ENCODE measurements at regions of chr19 and their contacts with region 1.

Region 1: GRCh38 chr19:38335949-38336637 is 463 bp downstream of the CATSPERG start:
- DNase-seq: peak; percentile 83
- H3K4me3 ChIP-seq: peak overlapping the region; percentile 94
- H3K27ac ChIP-seq: peak overlapping the region; percentile 70
- H3K27me3 ChIP-seq: no peaks in the 10 kb centered on the region
- CTCF ChIP-seq: no peak

Region 2: GRCh38 chr19:38233740-38234251 is 102.3 kb before region 1 on chr19:
- CTCF ChIA-PET with region 1: interaction called, 32 read pairs
- POLR2A ChIA-PET with region 1: no interaction called
- DNase-seq: peak; percentile 27
- H3K4me3 ChIP-seq: no peak overlapping the region
- H3K27ac ChIP-seq: no peak overlapping the region
- H3K27me3 ChIP-seq: peaks cover 5% of the 10 kb centered on the region
- CTCF ChIP-seq: peak; percentile 89

Region 3: GRCh38 chr19:38351865-38352395 is 15.8 kb after region 1 on chr19:
- CTCF ChIA-PET with region 1: no interaction called
- POLR2A ChIA-PET with region 1: no interaction called
- DNase-seq: no peak
- H3K4me3 ChIP-seq: no peak overlapping the region
- H3K27ac ChIP-seq: no peak overlapping the region
- H3K27me3 ChIP-seq: peaks cover 24% of the 10 kb centered on the region
- CTCF ChIP-seq: no peak

Region 4: GRCh38 chr19:38362076-38362894 is 26.2 kb after region 1 on chr19:
- CTCF ChIA-PET with region 1: no interaction called
- POLR2A ChIA-PET with region 1: no interaction called
- DNase-seq: no peak
- H3K4me3 ChIP-seq: peak overlapping the region; percentile 69
- H3K27ac ChIP-seq: no peak overlapping the region
- H3K27me3 ChIP-seq: peaks cover 33% of the 10 kb centered on the region
- CTCF ChIP-seq: no peak

Region 5: GRCh38 chr19:38374429-38375176 is 38.5 kb after region 1 on chr19 and contains the start of gene PSMD8:
- CTCF ChIA-PET with region 1: interaction called, 19 read pairs
- POLR2A ChIA-PET with region 1: interaction called, 3 read pairs
- DNase-seq: peak; percentile 95
- H3K4me3 ChIP-seq: peak within 1 kb of the TSS; percentile 92
- H3K27ac ChIP-seq: peak within 1 kb of the TSS; percentile 87
- H3K27me3 ChIP-seq: peaks cover 5% of the 10 kb centered on the region
- CTCF ChIP-seq: no peak; the same call in 1 of the 2 replicates
- polyA plus RNA-seq, gene PSMD8: 287 and 328 TPM in 2 replicates

Region 6: DNA sequence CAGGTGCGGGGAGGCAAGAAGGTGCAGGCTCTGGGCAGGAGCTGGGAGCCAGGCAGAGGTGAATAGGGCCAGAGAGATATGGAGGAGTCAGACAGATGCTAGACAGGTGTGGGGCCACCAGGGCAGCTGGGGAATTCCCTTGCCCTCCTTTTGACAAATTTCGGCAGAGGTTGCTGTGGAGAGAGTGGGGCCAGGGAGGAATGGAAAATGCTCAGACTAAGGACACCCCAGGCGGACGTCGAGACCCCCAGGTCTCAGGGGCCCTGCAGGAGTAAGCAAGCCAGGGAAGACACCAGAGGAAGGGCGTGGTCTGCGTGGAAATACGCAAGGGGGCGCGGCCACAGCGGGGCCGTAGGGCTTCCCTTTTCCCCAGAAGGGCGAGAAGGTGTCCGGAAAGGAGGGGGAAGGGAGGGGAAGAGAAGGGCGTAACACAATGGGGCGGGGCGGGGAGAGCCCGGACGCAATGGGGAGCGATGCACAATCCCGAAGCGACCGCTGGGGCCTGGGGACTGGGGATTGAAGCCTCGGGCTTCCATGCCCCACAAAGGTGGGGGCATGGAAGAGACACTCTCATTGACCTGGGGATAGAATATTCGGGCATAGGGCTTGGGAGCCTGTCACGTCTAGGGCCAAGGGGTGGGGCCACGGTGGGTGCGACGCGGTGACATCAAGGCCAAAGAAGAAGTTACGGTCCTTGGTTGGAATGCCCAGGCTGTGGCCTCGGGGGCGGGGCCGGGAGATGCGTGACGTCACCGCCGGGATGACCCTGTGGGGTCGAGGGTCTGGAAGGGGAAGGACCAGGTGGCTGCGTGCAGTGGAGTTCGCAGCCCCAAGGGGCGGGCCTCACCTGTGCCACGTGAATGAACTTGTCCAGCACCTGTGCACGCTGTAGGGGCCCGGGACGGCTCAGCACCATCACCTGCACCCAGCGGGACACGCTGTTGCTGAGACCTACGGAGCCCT is 81.7 kb after region 1 on chr19:
- CTCF ChIA-PET with region 1: no interaction called
- POLR2A ChIA-PET with region 1: no interaction called
- DNase-seq: no peak
- H3K4me3 ChIP-seq: no peak overlapping the region
- H3K27ac ChIP-seq: peak overlapping the region; percentile 11
- H3K27me3 ChIP-seq: peaks cover 29% of the 10 kb centered on the region
- CTCF ChIP-seq: no peak

Region 7: DNA sequence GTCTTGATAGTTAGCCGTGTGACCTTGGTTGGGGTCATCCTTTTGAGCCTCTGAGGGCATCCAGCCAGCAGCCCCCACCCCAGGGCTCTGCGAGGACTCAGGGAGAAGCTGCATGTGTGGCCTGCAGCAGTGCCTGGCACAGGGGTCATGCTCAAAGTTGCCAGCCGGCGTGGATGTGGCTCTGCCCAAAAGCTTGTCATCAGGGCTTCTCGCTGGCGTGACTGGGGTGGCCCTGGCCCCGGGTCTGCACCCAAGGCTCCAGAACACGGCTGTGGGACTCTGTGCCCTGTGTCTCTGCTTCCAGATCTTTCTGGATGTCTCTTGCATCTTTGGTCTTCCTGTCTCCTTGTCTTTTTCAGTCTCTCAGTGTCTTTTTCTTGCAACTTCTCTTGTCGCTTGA is 188.3 kb after region 1 on chr19:
- CTCF ChIA-PET with region 1: no interaction called
- POLR2A ChIA-PET with region 1: no interaction called
- DNase-seq: no peak
- H3K4me3 ChIP-seq: no peak overlapping the region
- H3K27ac ChIP-seq: no peak overlapping the region
- H3K27me3 ChIP-seq: no peaks in the 10 kb centered on the region
- CTCF ChIP-seq: no peak

Measured in AG04450 (cell line).